HEK293 (cell line): ENCODE measurements at regions of chr17 and their contacts with region 1.

Region 1: GRCh38 chr17:17694169-17695081 is 13.2 kb downstream of the RAI1 start:
- H3K4me3 ChIP-seq: peak overlapping the region; percentile 67
- H3K27ac ChIP-seq: peak overlapping the region; percentile 99
- H3K4me1 ChIP-seq: peaks cover 64% of the 10 kb centered on the region
- CTCF ChIP-seq: no peak

Region 2: GRCh38 chr17:17653343-17653742 is 41.1 kb before region 1 on chr17:
- CTCF ChIA-PET with region 1: no interaction called
- POLR2A ChIA-PET with region 1: no interaction called
- H3K4me3 ChIP-seq: no peak overlapping the region
- H3K27ac ChIP-seq: no peak overlapping the region
- H3K4me1 ChIP-seq: no peaks in the 10 kb centered on the region
- CTCF ChIP-seq: no peak

Region 3: GRCh38 chr17:17681187-17681848 is 13.1 kb before region 1 on chr17 and contains the start of gene RAI1:
- CTCF ChIA-PET with region 1: interaction called, 8 read pairs
- POLR2A ChIA-PET with region 1: interaction called, 45 read pairs
- H3K4me3 ChIP-seq: peak within 1 kb of the TSS; percentile 76
- H3K27ac ChIP-seq: peak within 1 kb of the TSS; percentile 96
- H3K4me1 ChIP-seq: peaks cover 25% of the 10 kb centered on the region
- CTCF ChIP-seq: no peak